ENCODE measurements at regions of chr3 and their contacts with region 1.

Region 1: DNA sequence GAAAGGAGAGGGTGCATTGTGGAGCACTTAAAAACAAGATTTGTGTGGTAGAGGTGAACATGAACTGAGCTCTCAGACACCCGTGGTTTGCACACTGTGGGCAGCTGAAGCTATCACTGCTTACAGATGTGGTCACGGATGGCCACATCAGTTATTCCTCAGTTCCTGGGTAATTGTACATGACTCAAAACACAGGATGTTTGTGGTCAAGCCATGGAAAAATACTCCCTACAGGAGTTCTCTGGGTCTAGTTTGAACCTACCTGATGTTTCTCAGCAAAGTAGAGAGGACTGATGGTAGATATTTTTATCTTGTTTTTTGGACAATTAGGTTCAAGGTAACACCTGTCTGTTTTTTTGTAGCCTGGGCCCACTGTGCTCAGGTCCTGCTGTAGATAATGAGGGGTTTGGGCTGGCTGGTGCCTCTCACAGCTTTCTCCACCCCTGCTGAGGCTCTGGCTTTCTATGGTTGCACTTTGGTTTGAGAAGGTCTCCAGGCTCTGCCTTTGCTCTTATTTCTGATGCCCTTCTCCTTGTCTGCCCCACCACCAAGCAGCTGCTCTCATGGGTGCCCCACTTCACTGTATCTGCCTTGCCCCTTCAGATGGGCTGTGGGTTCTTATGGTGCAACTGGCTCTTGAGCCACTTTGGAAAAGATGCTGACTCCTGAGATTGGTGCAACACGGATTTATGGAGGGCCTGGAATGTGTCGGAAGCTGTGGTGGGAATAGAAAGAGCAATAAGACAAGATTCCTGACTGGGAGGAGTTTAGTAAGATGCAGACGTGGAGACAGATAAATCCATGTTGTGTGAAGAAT is 40.1 kb downstream of the CDCP1 start:
- DNase-seq: peak; percentile 85
- H3K4me3 Mint-ChIP-seq: no peak overlapping the region
- H3K27ac Mint-ChIP-seq: peak overlapping the region; percentile 54
- H3K4me1 Mint-ChIP-seq: peaks cover 64% of the 10 kb centered on the region
- H3K27me3 Mint-ChIP-seq: peaks cover 10% of the 10 kb centered on the region

Region 2: DNA sequence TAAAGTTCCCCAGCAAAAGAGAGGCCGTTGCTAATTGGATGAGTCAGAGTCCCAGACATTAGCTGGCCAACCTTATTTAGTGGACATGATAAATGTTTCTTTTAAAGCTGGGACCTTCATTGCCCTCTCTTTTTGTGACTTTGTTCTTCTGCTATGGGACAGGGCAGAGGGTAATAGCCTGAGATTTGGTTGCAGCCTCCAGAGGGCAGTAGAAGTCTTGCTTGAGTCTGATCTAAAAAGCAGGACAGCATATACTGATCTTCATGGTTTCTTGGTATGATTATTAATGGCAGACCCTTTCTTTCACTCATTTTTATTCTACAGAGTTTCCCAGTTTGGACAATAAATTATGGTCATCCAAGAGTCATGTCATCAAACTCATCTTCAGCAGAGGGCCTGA is 576.1 kb before region 1 on chr3:
- CTCF ChIA-PET with region 1: no interaction called
- POLR2A ChIA-PET with region 1: no interaction called
- intact Hi-C with region 1: no loop called
- DNase-seq: peak; percentile 23
- H3K4me3 Mint-ChIP-seq: no peak overlapping the region
- H3K27ac Mint-ChIP-seq: no peak overlapping the region
- H3K4me1 Mint-ChIP-seq: no peaks in the 10 kb centered on the region
- H3K27me3 Mint-ChIP-seq: peaks cover 13% of the 10 kb centered on the region

Region 3: DNA sequence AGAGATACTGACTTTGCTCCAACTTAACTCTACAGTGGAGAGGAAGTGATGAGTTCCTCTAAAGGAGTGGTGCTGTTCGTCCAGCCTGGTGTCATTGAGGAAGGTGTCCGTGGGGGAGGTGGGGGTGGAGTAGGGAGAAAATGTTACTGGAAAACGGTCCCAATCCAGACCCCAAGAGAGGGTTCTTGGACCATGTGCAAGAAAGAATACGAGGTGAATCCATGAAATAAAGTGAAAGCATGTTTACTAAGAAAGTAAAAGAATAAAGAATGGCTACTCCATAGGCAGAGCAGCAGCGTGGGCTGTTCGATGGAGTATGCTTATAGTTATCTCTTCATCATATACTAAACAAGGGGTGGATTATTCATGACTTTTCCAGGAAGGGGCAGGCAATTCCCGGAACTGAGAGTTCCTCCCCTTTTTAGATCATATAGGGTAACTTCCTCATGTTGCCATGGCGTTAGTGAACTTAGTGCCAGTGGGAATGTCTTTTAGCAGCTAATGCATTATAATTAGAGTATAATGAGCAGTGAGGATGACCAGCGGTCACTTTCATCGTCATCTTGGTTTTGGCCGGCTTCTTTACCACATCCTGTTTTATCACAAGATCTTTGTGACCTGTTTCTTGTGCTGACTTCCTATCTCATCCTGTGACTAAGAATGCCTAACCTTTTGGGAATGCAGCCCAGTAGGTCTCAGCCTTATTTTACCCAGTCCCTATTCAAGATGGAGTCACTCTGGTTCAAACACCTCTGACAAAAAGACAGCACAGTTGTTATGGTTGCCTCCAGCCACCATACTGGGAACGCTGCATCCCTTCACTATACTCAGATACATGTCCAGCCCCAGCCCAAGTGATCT is 41.3 kb before region 1 on chr3:
- CTCF ChIA-PET with region 1: no interaction called
- POLR2A ChIA-PET with region 1: no interaction called
- intact Hi-C with region 1: loop called (anchors 5 kb)
- DNase-seq: peak; percentile 75
- H3K4me3 Mint-ChIP-seq: peak overlapping the region; percentile 56
- H3K27ac Mint-ChIP-seq: peak overlapping the region; percentile 4
- H3K4me1 Mint-ChIP-seq: peaks cover 26% of the 10 kb centered on the region
- H3K27me3 Mint-ChIP-seq: peaks cover 2% of the 10 kb centered on the region

Region 4: GRCh38 chr3:45135959-45136358 is 29.9 kb after region 1 on chr3:
- CTCF ChIA-PET with region 1: no interaction called
- POLR2A ChIA-PET with region 1: no interaction called
- intact Hi-C with region 1: no loop called
- DNase-seq: no peak
- H3K4me3 Mint-ChIP-seq: no peak overlapping the region
- H3K27ac Mint-ChIP-seq: no peak overlapping the region
- H3K4me1 Mint-ChIP-seq: no peaks in the 10 kb centered on the region
- H3K27me3 Mint-ChIP-seq: peaks cover 4% of the 10 kb centered on the region

Region 5: GRCh38 chr3:45167011-45167911 is 61.2 kb after region 1 on chr3:
- CTCF ChIA-PET with region 1: no interaction called
- POLR2A ChIA-PET with region 1: no interaction called
- intact Hi-C with region 1: loop called (anchors 1 kb)
- DNase-seq: peak; percentile 95
- H3K4me3 Mint-ChIP-seq: peak overlapping the region; percentile 58
- H3K27ac Mint-ChIP-seq: peak overlapping the region; percentile 88
- H3K4me1 Mint-ChIP-seq: peaks cover 24% of the 10 kb centered on the region
- H3K27me3 Mint-ChIP-seq: no peaks in the 10 kb centered on the region

Region 6: DNA sequence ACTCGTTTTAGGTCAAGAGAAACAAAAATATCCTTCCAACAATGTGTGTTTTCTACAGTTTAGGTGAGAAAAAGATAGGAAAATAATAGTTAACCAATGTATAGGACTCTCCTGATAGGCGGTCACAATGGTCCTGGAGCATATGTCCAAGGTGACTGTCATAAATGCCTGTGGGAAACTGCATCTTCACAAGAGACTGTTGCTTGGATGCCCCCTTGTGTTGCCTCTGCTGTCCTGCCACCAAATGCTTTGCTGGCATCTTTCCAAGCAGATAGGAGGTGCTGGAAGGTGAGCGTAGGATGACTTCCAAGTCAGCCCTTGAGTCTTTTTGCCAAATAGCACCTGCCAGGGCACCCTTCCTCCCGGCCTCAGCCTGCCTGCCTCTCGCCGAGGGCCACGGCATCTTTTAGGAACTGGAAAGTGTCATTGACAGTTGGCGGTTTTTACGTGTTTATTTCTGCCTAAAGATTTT is 559.1 kb after region 1 on chr3:
- CTCF ChIA-PET with region 1: interaction called, 4 read pairs
- POLR2A ChIA-PET with region 1: no interaction called
- intact Hi-C with region 1: loop called (anchors 5 kb)
- DNase-seq: peak; percentile 80
- H3K4me3 Mint-ChIP-seq: peak overlapping the region; percentile 76
- H3K27ac Mint-ChIP-seq: peak overlapping the region; percentile 83
- H3K4me1 Mint-ChIP-seq: peaks cover 51% of the 10 kb centered on the region
- H3K27me3 Mint-ChIP-seq: no peaks in the 10 kb centered on the region